Posterior vena cava (tissue), 2 donors: ENCODE measurements at regions of chr3 and their contacts with region 1.

Region 1: DNA sequence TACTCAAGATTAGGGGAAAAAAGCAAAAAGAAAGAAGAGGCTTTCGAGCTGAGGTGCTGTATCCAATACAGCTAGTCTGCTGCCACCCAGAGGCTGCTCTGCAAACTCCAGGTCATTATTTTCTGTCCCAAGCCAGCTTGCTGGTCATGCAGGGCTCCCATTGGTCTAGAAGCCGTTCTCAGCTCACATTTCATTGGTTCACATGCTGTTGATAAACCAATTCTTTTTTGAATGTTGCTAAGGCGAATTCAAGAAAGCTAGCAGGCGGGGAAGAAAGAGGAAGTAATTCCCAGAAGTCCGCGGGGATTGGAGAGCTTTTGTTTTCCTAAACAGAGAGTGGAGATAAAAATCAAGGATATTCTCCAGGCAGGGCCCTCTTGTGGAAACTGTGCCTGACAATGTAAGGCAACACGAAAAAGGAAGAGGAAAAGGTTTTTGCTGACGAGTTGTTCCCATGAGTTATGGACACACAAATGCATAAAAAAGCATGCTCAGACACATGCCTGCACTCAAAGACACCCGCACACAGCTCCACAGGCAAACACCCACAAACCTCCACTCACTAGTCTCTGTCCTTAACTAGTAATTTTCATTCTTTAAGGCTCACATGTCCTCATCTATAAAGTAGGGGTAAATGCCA is 33.4 kb downstream of the FSTL1 start:
- DNase-seq: peak; percentile 95

Region 2: DNA sequence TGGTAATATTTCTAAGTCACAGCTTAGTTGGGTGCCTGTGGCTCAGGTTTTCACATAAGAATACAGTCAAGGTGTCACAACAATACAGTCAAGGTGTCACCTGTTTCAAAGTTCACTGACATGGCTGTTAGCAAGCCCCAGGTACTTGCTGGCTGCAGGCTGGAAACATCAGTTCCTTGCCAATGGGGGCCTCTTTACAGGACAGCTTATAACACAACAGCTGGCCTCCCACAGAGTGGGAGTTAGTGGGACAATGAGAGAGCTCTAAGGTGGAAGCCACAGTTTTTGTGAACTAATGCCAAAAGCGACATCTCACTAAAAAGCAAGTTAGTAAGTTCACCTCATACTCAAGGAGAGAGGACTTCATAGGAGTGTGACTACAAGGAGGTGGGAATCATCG is 177.7 kb before region 1 on chr3:
- intact Hi-C with region 1: loop called in 1 of 2 experiments (anchors 5 kb)
- DNase-seq: no peak

Region 3: GRCh38 chr3:120506828-120507774 is 89.7 kb after region 1 on chr3:
- intact Hi-C with region 1: loop called in 1 of 2 experiments (anchors 10 kb)
- DNase-seq: no peak